CD8-positive, alpha-beta memory T cell (primary cell): ENCODE measurements at regions of chrX and their contacts with region 1.

Region 1: GRCh38 chrX:13005661-13006473 is 31.0 kb downstream of the TMSB4X start:
- DNase-seq: no peak
- H3K4me3 ChIP-seq: no peak overlapping the region
- H3K4me3 Mint-ChIP-seq: peak overlapping the region; percentile 56 to 75 (median 64)
- H3K27ac ChIP-seq: no peak overlapping the region
- H3K27ac Mint-ChIP-seq: peak overlapping the region; percentile 84 to 96 (median 91)
- H3K4me1 ChIP-seq: peaks cover 69% of the 10 kb centered on the region
- H3K4me1 Mint-ChIP-seq: peaks cover 45 to 80% (median 72%) of the 10 kb centered on the region in 3 donors
- H3K27me3 ChIP-seq: no peaks in the 10 kb centered on the region
- H3K27me3 Mint-ChIP-seq: peaks cover 0 to 10% of the 10 kb centered on the region in 2 donors

Region 2: GRCh38 chrX:12962041-12962504 is 43.8 kb before region 1 on chrX:
- CTCF ChIA-PET with region 1: no interaction called
- POLR2A ChIA-PET with region 1: no interaction called
- DNase-seq: no peak
- H3K4me3 ChIP-seq: no peak overlapping the region
- H3K4me3 Mint-ChIP-seq: peak overlapping the region in 3 of 7 donors; percentile 2 to 37 (median 12)
- H3K27ac ChIP-seq: no peak overlapping the region
- H3K27ac Mint-ChIP-seq: peak overlapping the region in 7 of 8 donors; percentile 18 to 84 (median 75)
- H3K4me1 ChIP-seq: peaks cover 58% of the 10 kb centered on the region
- H3K4me1 Mint-ChIP-seq: peaks cover 56 to 67% (median 64%) of the 10 kb centered on the region in 3 donors
- H3K27me3 ChIP-seq: no peaks in the 10 kb centered on the region
- H3K27me3 Mint-ChIP-seq: no peaks in the 10 kb centered on the region

Region 3: DNA sequence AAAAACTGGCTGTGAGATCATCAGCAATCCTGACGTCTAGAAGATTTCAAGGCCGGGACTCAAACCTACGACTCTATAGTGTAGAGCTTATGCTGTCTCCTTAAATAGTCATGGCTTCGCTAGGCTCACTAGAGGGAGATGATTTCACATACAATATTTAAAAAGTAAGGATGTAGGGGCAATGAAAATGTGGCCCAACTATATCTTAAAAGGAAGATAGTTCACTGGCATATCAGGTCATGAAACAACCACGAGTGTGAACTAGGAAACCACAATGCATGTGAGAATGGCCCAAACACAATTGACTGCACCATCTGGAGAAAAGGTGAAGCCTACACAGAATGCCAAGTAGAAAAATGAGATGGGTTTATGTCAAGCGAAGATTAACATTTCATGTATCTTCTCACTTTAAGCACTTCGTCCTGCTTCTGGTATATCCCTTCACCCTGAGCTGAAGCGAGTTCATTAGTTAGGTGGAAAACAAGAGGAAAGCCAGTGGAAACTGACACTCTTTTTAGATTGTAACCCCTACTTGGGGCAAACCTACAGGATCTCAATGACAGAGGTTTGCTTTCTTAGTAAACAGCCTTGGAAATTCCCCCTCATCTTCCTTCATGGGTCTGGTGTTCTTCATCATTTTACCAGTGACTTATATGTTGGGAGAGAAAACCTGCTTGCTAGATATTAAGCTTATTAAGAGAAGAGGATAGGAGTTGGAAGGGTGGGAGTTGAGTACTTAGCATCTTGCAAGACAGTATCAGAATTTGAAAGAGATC is 21.2 kb after region 1 on chrX:
- CTCF ChIA-PET with region 1: no interaction called
- POLR2A ChIA-PET with region 1: interaction called, 10 read pairs
- DNase-seq: peak in 2 of 5 donors; percentile 3 to 28
- H3K4me3 ChIP-seq: no peak overlapping the region
- H3K4me3 Mint-ChIP-seq: peak overlapping the region in 5 of 7 donors; percentile 3 to 48 (median 23)
- H3K27ac ChIP-seq: no peak overlapping the region
- H3K27ac Mint-ChIP-seq: peak overlapping the region; percentile 10 to 92 (median 86)
- H3K4me1 ChIP-seq: peaks cover 94% of the 10 kb centered on the region
- H3K4me1 Mint-ChIP-seq: peaks cover 72 to 89% (median 86%) of the 10 kb centered on the region in 3 donors
- H3K27me3 ChIP-seq: no peaks in the 10 kb centered on the region
- H3K27me3 Mint-ChIP-seq: peaks cover 0 to 19% of the 10 kb centered on the region in 2 donors

Region 4: DNA sequence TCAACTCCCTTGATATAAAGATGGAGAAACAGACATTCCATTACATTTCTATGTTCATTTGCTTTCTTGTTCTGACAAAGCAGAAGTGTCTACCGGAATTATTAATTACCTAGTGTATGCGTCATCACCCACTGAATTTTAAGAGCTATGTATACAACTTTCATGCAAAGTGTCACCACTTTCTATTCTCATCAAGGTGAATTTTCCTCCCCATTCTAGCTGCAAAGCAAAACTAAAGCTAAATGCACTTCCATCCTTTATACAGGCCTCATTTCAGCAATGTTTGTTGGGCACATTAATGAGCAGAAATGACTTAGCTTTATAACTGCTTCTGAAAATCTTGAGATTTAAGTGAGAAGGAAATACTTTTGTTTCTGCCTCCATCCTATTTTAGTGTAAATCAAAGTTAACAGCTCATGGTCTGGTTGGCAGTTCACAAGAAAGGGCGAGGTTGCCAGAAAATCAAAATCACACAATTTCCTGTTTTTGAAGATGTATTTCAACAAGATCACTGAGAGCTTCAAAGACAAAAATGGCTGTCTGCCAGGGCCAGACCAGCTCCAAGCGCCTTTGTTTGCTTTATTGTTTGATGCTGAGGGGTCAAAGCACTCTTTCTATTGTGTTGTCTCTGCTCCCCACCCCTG is 45.8 kb after region 1 on chrX:
- CTCF ChIA-PET with region 1: no interaction called
- POLR2A ChIA-PET with region 1: no interaction called
- DNase-seq: peak in 3 of 5 donors; percentile 46 to 78 (median 58)
- H3K4me3 ChIP-seq: no peak overlapping the region
- H3K4me3 Mint-ChIP-seq: peak overlapping the region; percentile 8 to 69 (median 51)
- H3K27ac ChIP-seq: peak overlapping the region; percentile 21
- H3K27ac Mint-ChIP-seq: peak overlapping the region; percentile 61 to 97 (median 90)
- H3K4me1 ChIP-seq: peaks cover 84% of the 10 kb centered on the region
- H3K4me1 Mint-ChIP-seq: peaks cover 61 to 84% (median 83%) of the 10 kb centered on the region in 3 donors
- H3K27me3 ChIP-seq: no peaks in the 10 kb centered on the region
- H3K27me3 Mint-ChIP-seq: peaks cover 0 to 7% of the 10 kb centered on the region in 2 donors